ENCODE measurements at regions of chr5 and their contacts with region 1.

Region 1: GRCh38 chr5:97019435-97020117 is 83.7 kb downstream of the LNPEP start:
- DNase-seq: no peak
- ATAC-seq: no peak
- H3K4me3 ChIP-seq: no peak overlapping the region
- H3K4me3 Mint-ChIP-seq: no peak overlapping the region
- H3K27ac ChIP-seq: no peak overlapping the region
- H3K27ac Mint-ChIP-seq: peak overlapping the region; percentile 46
- H3K4me1 ChIP-seq: peaks cover 4% of the 10 kb centered on the region
- H3K4me1 Mint-ChIP-seq: peaks cover 31% of the 10 kb centered on the region
- H3K27me3 ChIP-seq: no peaks in the 10 kb centered on the region
- H3K27me3 Mint-ChIP-seq: no peaks in the 10 kb centered on the region
- CTCF ChIP-seq: no peak

Region 2: DNA sequence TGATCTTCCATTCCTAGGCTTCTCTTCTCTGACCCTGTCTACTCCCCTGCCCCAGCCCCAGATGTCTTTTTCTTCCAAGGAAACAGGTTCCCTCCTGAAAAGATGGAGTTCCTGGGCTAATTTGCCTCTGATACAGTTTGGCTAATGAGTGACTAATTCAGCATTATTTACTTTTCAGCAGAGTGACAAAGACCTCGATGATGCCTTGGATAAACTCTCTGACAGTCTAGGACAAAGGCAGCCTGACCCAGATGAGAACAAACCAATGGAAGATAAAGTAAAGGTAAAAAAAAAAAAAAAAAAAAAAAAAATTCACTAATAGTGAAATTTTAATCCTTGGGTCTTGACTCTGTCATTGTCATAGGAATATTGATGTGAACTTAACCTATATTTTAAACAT is 254.5 kb before region 1 on chr5:
- CTCF ChIA-PET with region 1: no interaction called
- POLR2A ChIA-PET with region 1: no interaction called
- intact Hi-C with region 1: loop called in 1 of 2 experiments (anchors 5 kb)
- DNase-seq: no peak
- ATAC-seq: no peak
- H3K4me3 ChIP-seq: no peak overlapping the region
- H3K4me3 Mint-ChIP-seq: no peak overlapping the region
- H3K27ac ChIP-seq: no peak overlapping the region
- H3K27ac Mint-ChIP-seq: peak overlapping the region; percentile 78
- H3K4me1 ChIP-seq: no peaks in the 10 kb centered on the region
- H3K4me1 Mint-ChIP-seq: peaks cover 12% of the 10 kb centered on the region
- H3K27me3 ChIP-seq: no peaks in the 10 kb centered on the region
- H3K27me3 Mint-ChIP-seq: no peaks in the 10 kb centered on the region
- CTCF ChIP-seq: no peak

Region 3: DNA sequence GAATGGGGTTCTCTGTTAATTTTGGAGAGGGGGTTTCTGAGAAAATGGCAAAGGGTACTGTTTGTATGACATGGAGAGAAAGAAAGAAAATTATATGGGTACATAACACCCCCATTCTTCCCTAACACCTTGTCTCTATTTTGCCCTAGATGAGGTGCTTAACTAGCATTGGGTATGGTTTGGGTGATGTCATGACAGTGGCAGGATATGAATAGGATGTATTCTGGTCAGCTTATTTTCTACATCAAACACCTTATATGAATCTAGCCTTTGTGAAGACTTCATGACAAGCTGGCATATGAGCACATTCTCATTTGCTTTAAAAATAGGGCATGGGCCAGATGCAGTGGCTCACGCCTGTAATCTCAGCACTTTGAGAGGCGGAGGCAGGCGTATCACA is 25.1 kb before region 1 on chr5:
- CTCF ChIA-PET with region 1: no interaction called
- POLR2A ChIA-PET with region 1: no interaction called
- intact Hi-C with region 1: no loop called
- DNase-seq: no peak
- ATAC-seq: peak; percentile 46
- H3K4me3 ChIP-seq: no peak overlapping the region
- H3K4me3 Mint-ChIP-seq: no peak overlapping the region
- H3K27ac ChIP-seq: no peak overlapping the region
- H3K27ac Mint-ChIP-seq: peak overlapping the region; percentile 47
- H3K4me1 ChIP-seq: peaks cover 6% of the 10 kb centered on the region
- H3K4me1 Mint-ChIP-seq: peaks cover 58% of the 10 kb centered on the region
- H3K27me3 ChIP-seq: no peaks in the 10 kb centered on the region
- H3K27me3 Mint-ChIP-seq: no peaks in the 10 kb centered on the region
- CTCF ChIP-seq: no peak

Region 4: GRCh38 chr5:97071101-97071500 is 51.5 kb after region 1 on chr5:
- CTCF ChIA-PET with region 1: no interaction called
- POLR2A ChIA-PET with region 1: no interaction called
- intact Hi-C with region 1: no loop called
- DNase-seq: no peak
- ATAC-seq: no peak
- H3K4me3 ChIP-seq: no peak overlapping the region
- H3K4me3 Mint-ChIP-seq: no peak overlapping the region
- H3K27ac ChIP-seq: no peak overlapping the region
- H3K27ac Mint-ChIP-seq: no peak overlapping the region
- H3K4me1 ChIP-seq: no peaks in the 10 kb centered on the region
- H3K4me1 Mint-ChIP-seq: peaks cover 5% of the 10 kb centered on the region
- H3K27me3 ChIP-seq: no peaks in the 10 kb centered on the region
- H3K27me3 Mint-ChIP-seq: peaks cover 7% of the 10 kb centered on the region
- CTCF ChIP-seq: no peak

Region 5: DNA sequence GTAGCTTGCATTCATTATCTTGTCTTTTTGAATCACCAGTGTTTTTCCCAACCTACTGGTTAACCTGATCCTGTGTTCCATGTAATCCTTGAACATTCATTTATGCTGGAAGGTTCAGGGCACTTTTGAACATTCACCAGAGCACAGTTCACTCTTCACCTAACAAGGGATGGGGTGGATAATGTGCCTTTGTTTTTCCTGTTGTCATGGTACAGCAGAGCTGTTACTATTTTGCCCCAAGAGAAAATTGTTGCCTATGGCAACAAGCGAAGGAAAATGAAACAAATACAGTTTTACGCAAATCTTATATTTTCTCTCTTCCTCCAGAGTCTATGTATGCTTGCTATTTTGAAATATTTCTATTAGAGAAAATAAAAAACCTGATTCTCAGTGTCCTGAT is 223.8 kb after region 1 on chr5:
- CTCF ChIA-PET with region 1: no interaction called
- POLR2A ChIA-PET with region 1: no interaction called
- intact Hi-C with region 1: no loop called
- DNase-seq: no peak
- ATAC-seq: no peak
- H3K4me3 ChIP-seq: no peak overlapping the region
- H3K4me3 Mint-ChIP-seq: no peak overlapping the region
- H3K27ac ChIP-seq: no peak overlapping the region
- H3K27ac Mint-ChIP-seq: no peak overlapping the region
- H3K4me1 ChIP-seq: no peaks in the 10 kb centered on the region
- H3K4me1 Mint-ChIP-seq: no peaks in the 10 kb centered on the region
- H3K27me3 ChIP-seq: no peaks in the 10 kb centered on the region
- H3K27me3 Mint-ChIP-seq: peaks cover 2% of the 10 kb centered on the region
- CTCF ChIP-seq: no peak

Region 6: DNA sequence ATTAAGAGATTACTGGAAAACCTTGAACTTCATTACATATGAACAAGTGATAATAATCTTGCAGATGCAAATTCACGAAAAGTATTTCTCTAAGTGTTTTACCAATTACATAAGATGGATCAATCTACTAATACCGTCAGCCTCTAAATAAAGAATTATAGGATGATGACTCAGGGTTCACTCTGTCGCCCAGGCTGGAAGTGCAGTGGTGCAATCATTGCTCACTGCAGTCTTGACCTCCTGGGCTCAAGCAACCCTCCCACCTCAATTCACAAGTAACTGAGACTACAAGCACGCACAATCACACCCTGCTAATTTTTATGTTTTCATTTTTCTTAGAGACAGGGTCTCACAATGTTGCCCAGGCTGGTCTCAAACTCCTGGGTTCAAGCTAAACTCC is 1853.1 kb after region 1 on chr5:
- CTCF ChIA-PET with region 1: no interaction called
- POLR2A ChIA-PET with region 1: no interaction called
- intact Hi-C with region 1: loop called in 1 of 2 experiments (anchors 10 kb)
- DNase-seq: no peak
- ATAC-seq: no peak
- H3K4me3 ChIP-seq: no peak overlapping the region
- H3K4me3 Mint-ChIP-seq: no peak overlapping the region
- H3K27ac ChIP-seq: no peak overlapping the region
- H3K27ac Mint-ChIP-seq: no peak overlapping the region
- H3K4me1 ChIP-seq: no peaks in the 10 kb centered on the region
- H3K4me1 Mint-ChIP-seq: peaks cover 4% of the 10 kb centered on the region
- H3K27me3 ChIP-seq: no peaks in the 10 kb centered on the region
- H3K27me3 Mint-ChIP-seq: no peaks in the 10 kb centered on the region
- CTCF ChIP-seq: no peak

Measured in CD8-positive, alpha-beta T cell (primary cell).